ENCODE measurements at regions of chr12 and their contacts with region 1.

Region 1: GRCh38 chr12:70484464-70484863 is 118.4 kb downstream of the KCNMB4 start:
- DNase-seq: no peak
- H3K4me3 ChIP-seq: no peak overlapping the region
- H3K27me3 ChIP-seq: no peaks in the 10 kb centered on the region
- CTCF ChIP-seq: no peak

Region 2: DNA sequence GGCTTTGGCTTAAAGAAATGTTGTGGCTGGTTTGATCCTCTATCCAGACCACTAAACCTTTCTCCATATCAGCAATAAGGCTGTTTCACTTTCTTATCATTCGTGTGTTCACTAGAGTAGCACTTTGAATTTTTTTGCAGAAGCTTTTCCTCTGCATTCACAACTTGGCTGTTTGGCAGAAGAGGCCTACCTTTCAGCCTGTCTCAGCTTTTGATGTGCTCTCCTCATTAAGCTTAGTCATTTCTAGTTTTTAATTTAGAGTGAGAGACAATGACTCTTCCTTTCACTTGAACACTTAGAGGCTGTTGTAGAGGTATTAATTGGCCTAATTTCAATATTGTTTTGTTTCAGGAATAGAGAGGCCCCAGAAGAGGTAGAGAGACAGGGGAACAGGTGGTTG is 104.6 kb before region 1 on chr12:
- CTCF ChIA-PET with region 1: no interaction called
- POLR2A ChIA-PET with region 1: interaction called, 10 read pairs
- DNase-seq: no peak
- H3K4me3 ChIP-seq: no peak overlapping the region
- H3K27me3 ChIP-seq: no peaks in the 10 kb centered on the region
- CTCF ChIP-seq: no peak

Measured in BJ (cell line).